Sigmoid colon (tissue), 7 donors: ENCODE measurements at regions of chr6 and their contacts with region 1.

Region 1: GRCh38 chr6:106339334-106340029 is 13.9 kb upstream of the ATG5 start:
- DNase-seq: peak; percentile 68
- H3K4me3 ChIP-seq: no peak overlapping the region
- H3K27ac ChIP-seq: no peak overlapping the region
- H3K4me1 ChIP-seq: peaks cover 0 to 7% (median 3%) of the 10 kb centered on the region in 4 donors
- H3K27me3 ChIP-seq: no peaks in the 10 kb centered on the region
- CTCF ChIP-seq: peak; percentile 57 to 74 (median 63)
- EP300 ChIP-seq: no peak
- POLR2A ChIP-seq: no peak

Region 2: DNA sequence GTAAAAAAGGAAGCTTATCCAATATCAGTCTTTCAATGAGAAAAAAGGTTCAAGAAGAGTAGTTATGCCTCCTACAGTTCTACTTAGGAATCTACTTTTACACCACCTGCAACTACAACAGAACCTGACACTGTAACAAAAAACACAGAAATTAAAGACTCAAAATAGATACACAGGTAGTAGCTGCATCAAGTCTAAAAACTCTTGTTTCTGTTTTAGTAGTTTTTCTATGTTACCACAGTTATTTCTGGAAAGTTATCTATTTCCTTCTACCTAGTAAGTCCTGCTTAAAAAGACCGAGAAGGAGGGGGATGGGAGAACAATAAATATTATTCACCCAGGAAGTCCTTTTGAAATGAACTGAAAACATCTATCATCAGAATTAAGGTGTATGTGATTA is 66.4 kb before region 1 on chr6:
- intact Hi-C with region 1: no loop called
- DNase-seq: no peak
- H3K4me3 ChIP-seq: no peak overlapping the region
- H3K27ac ChIP-seq: no peak overlapping the region
- H3K4me1 ChIP-seq: peaks cover 0 to 50% (median 17%) of the 10 kb centered on the region in 4 donors
- H3K27me3 ChIP-seq: no peaks in the 10 kb centered on the region
- CTCF ChIP-seq: no peak
- EP300 ChIP-seq: no peak
- POLR2A ChIP-seq: no peak

Region 3: DNA sequence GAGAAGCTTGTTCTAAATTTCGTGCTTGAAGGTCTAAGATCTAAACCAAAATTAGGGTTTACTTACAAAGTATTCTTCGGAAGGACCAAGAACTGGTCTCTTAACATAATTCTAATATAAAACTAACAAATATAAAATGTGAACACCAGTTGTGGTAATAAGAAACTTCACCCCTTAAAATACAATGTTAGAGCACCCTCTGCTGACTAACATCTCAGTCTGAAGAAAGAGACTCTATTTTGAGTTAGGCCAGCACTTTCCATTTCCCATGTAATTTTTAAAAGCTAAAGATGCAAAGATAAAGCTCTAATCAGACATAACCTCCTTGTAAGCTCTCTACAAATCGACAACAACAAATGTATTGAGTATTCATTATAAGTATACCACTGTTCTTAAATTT is 38.5 kb before region 1 on chr6:
- intact Hi-C with region 1: no loop called
- DNase-seq: no peak
- H3K4me3 ChIP-seq: no peak overlapping the region
- H3K27ac ChIP-seq: no peak overlapping the region
- H3K4me1 ChIP-seq: no peaks in the 10 kb centered on the region
- H3K27me3 ChIP-seq: no peaks in the 10 kb centered on the region
- CTCF ChIP-seq: peak in 3 of 4 experiments; percentile 12 to 33 (median 26)
- EP300 ChIP-seq: no peak
- POLR2A ChIP-seq: no peak

Region 4: DNA sequence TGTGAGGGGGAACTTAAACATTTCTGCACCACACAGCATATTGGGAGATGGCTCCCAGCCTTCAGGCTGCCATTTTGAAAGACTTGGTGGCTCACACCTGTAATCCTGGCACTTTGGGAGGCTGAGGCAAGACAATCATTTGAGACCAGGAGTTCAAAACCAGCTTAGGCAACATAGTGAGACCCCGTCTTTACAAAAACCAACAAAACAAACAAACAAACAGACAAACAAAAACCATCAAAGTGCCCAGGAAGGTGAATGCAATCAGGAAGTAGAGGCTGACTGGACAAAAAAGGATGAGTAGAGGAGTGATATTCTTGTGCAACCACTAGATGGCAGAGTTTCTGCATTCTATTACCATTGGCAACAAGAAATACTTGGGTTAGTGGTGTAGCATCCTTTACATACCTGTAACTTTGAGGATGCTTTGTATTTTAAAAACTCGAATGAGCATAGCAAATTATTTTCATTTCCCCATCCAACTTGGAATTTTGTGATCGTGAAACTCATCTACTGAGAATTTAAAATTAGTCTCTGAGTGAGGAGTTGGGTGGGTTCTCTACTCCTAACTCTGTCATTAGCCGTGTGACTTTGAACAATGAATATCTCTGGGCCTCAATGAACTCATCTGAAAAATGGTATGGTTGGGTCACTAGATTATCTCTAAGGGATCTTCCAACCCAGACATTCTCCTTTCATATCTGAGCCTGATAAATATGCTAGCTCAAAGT is 105.5 kb after region 1 on chr6:
- intact Hi-C with region 1: loop called (anchors 5 kb)
- DNase-seq: no peak
- H3K4me3 ChIP-seq: no peak overlapping the region
- H3K27ac ChIP-seq: no peak overlapping the region
- H3K4me1 ChIP-seq: no peaks in the 10 kb centered on the region
- H3K27me3 ChIP-seq: no peaks in the 10 kb centered on the region
- CTCF ChIP-seq: peak; percentile 62 to 77 (median 68)
- EP300 ChIP-seq: no peak
- POLR2A ChIP-seq: no peak

Region 5: DNA sequence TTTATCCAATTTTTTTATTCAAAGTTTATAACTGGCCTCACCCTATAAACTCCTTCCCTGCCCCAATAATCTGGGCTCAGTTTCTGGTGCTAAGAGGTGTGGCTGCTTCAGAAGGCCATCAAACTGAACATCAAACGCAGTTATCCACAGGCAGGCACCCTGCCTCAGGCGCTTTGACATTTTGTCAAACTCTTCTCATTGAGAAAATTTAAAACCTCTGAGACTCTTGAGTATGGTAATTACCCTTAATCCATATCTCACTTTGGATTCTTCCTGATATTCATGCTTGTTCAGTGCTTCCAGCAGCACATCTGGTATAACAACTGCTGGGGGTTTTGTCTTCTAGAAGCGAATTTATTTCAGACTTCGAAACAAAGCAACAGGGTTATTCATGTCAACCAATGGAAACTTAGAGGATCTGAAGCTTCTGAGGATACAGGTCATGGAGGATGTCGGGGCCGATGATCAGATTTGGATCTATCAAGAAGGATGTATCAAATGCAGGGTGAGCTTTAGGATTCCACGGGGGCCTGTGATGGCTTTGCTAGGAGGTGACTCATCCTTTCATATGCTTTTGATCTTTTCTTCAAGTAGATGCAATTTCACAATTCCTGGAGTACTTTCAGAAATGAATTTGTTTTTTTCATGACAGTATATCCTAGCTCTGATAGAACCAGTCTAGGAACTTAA is 221.7 kb after region 1 on chr6:
- intact Hi-C with region 1: loop called (anchors 2 kb)
- DNase-seq: no peak
- H3K4me3 ChIP-seq: no peak overlapping the region
- H3K27ac ChIP-seq: no peak overlapping the region
- H3K4me1 ChIP-seq: no peaks in the 10 kb centered on the region
- H3K27me3 ChIP-seq: no peaks in the 10 kb centered on the region
- CTCF ChIP-seq: no peak
- EP300 ChIP-seq: no peak
- POLR2A ChIP-seq: no peak

Region 6: DNA sequence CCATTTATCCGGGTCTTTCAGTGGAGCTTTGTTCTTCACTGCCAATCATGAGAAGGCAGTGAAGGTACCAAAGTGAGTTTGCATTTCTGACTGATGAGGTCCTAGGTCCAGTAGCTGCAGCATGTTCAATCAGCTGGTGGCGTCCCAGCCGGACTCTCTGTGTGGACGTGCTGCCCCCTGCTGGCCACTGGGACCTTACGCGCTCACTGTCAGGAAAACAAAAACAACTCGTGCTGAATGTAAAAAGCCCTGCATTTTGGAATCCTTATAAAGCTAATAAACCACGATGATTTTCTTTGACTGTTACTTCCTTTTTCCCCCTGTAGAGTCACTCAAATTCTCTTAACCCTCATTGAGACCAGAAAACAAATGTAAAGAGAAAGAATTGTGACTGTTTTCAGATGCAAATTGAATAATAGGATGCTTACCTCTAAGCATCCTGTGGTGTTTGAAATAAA is 640.0 kb after region 1 on chr6:
- intact Hi-C with region 1: loop called (anchors 2 kb)
- DNase-seq: peak; percentile 87
- H3K4me3 ChIP-seq: no peak overlapping the region
- H3K27ac ChIP-seq: no peak overlapping the region
- H3K4me1 ChIP-seq: peaks cover 0 to 11% (median 9%) of the 10 kb centered on the region in 4 donors
- H3K27me3 ChIP-seq: peaks cover 2 to 55% (median 10%) of the 10 kb centered on the region in 3 donors
- CTCF ChIP-seq: peak; percentile 58 to 90 (median 72)
- EP300 ChIP-seq: no peak
- POLR2A ChIP-seq: no peak

Region 7: GRCh38 chr6:107114213-107114905 is 774.9 kb after region 1 on chr6:
- intact Hi-C with region 1: loop called (anchors 10 kb)
- DNase-seq: peak; percentile 90
- H3K4me3 ChIP-seq: peak overlapping the region; percentile 41 to 77 (median 74)
- H3K27ac ChIP-seq: peak overlapping the region; percentile 52 to 82 (median 77)
- H3K4me1 ChIP-seq: peaks cover 0 to 21% (median 17%) of the 10 kb centered on the region in 4 donors
- H3K27me3 ChIP-seq: peaks cover 5 to 30% (median 7%) of the 10 kb centered on the region in 3 donors
- CTCF ChIP-seq: peak in 2 of 4 experiments; percentile 40 to 89
- EP300 ChIP-seq: no peak
- POLR2A ChIP-seq: no peak